B cell (primary cell): ENCODE measurements at regions of chr12 and their contacts with region 1.

Region 1: DNA sequence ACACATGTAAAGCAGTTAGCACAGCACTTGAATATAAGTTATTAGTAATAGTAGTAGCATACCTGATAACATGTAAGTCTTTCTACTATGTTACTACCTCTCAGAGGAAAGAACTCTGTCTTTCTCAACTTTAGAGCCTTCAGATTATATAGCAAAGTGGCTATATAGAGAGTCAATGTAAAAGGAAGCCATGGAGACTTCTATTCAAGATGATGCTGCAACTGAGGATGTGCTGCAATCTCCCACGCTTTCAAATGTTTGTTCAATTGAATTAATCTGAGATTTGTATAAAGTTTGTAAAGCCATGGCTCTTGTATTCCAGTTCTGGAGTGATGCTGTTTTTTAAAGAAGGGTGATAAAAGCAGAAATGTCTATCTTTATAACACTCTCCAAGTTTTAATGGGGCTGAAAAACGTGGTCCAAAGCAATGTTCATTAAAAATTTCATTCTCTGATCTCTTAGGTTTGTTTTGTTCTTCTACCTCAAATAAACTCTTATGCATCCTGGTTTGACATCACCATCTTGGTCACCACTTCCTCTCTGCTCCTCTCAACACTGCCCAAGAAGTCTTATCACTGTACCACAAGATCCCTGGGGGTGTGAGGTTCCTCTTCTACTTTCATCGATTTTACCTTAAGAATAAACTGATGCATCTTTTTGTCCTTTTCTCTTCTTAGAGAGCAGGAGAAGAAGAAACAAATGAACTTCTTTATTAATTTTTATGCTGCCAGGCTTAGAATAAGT is 40.6 kb downstream of the C12orf42 start:
- DNase-seq: peak; percentile 86
- ATAC-seq: peak; percentile 99
- H3K4me3 ChIP-seq: peak overlapping the region in 1 of 5 experiments; percentile 27
- H3K4me3 Mint-ChIP-seq: peak overlapping the region; percentile 60
- H3K27ac ChIP-seq: peak overlapping the region; percentile 74 to 85
- H3K27ac Mint-ChIP-seq: peak overlapping the region; percentile 80
- H3K4me1 ChIP-seq: peaks cover 32 to 44% of the 10 kb centered on the region in 2 donors
- H3K4me1 Mint-ChIP-seq: peaks cover 44% of the 10 kb centered on the region
- H3K27me3 ChIP-seq: no peaks in the 10 kb centered on the region
- H3K27me3 Mint-ChIP-seq: no peaks in the 10 kb centered on the region
- CTCF ChIP-seq: no peak

Region 2: GRCh38 chr12:103441437-103442181 is 13.6 kb before region 1 on chr12:
- CTCF ChIA-PET with region 1: interaction called, 3 read pairs
- POLR2A ChIA-PET with region 1: no interaction called
- intact Hi-C with region 1: loop called (anchors 1 kb)
- DNase-seq: peak; percentile 89
- ATAC-seq: peak; percentile 98
- H3K4me3 ChIP-seq: peak overlapping the region; percentile 46 to 97 (median 73)
- H3K4me3 Mint-ChIP-seq: peak overlapping the region; percentile 97
- H3K27ac ChIP-seq: peak overlapping the region; percentile 87 to 95
- H3K27ac Mint-ChIP-seq: peak overlapping the region; percentile 98
- H3K4me1 ChIP-seq: peaks cover 24% of the 10 kb centered on the region in 2 donors
- H3K4me1 Mint-ChIP-seq: peaks cover 28% of the 10 kb centered on the region
- H3K27me3 ChIP-seq: no peaks in the 10 kb centered on the region
- H3K27me3 Mint-ChIP-seq: no peaks in the 10 kb centered on the region
- CTCF ChIP-seq: no peak